K562 (cell line): ENCODE measurements at regions of chr3 and their contacts with region 1.

Region 1: GRCh38 chr3:129490242-129491045 is 38.0 kb upstream of the RHO start:
- DNase-seq: peak; percentile 72 to 84 (median 78)
- ATAC-seq: peak; percentile 100
- H3K4me3 ChIP-seq: no peak overlapping the region
- H3K27ac ChIP-seq: peak overlapping the region; percentile 40; the same call in 1 of the 3 replicates
- H3K4me1 ChIP-seq: peaks cover 2 to 6% of the 10 kb centered on the region in 2 experiments; a peak in 3 of 5 replicates
- H3K27me3 ChIP-seq: no peaks in the 10 kb centered on the region
- CTCF ChIP-seq: peak; percentile 75 to 86 (median 82)
- EP300 ChIP-seq: peak; percentile 56
- POLR2A ChIP-seq: no peak
- RAD21 ChIP-seq: peak; percentile 88 to 89

Region 2: DNA sequence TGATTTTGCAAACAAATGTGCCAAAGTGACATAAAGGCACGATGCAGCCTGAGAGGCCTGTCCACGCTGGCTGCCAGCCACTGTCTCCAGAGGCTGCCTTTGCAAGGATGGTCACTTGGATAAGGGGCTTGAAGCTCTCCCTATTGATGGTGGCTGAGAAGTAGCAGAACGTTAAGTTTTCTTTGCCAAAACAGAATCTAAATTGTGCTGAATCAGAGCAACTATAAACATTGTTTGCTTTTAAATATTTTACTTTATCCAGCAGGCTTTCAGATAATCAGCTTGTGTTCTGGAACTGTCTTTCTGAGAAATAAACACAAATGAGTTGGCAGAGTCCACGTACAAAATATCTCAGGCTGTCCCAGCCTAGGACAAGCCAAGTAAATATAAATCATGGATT is 283.0 kb before region 1 on chr3:
- CTCF ChIA-PET with region 1: no interaction called
- POLR2A ChIA-PET with region 1: no interaction called
- in situ Hi-C with region 1: no loop called
- intact Hi-C with region 1: no loop called
- DNase-seq: no peak
- ATAC-seq: peak; percentile 41; the same call in 1 of the 3 replicates
- H3K4me3 ChIP-seq: no peak overlapping the region
- H3K27ac ChIP-seq: peak overlapping the region; percentile 30; the same call in 1 of the 3 replicates
- H3K4me1 ChIP-seq: peaks cover 4 to 9% of the 10 kb centered on the region in 2 experiments; a peak in 4 of 5 replicates
- H3K27me3 ChIP-seq: no peaks in the 10 kb centered on the region
- CTCF ChIP-seq: no peak
- EP300 ChIP-seq: no peak
- POLR2A ChIP-seq: no peak
- RAD21 ChIP-seq: no peak

Region 3: DNA sequence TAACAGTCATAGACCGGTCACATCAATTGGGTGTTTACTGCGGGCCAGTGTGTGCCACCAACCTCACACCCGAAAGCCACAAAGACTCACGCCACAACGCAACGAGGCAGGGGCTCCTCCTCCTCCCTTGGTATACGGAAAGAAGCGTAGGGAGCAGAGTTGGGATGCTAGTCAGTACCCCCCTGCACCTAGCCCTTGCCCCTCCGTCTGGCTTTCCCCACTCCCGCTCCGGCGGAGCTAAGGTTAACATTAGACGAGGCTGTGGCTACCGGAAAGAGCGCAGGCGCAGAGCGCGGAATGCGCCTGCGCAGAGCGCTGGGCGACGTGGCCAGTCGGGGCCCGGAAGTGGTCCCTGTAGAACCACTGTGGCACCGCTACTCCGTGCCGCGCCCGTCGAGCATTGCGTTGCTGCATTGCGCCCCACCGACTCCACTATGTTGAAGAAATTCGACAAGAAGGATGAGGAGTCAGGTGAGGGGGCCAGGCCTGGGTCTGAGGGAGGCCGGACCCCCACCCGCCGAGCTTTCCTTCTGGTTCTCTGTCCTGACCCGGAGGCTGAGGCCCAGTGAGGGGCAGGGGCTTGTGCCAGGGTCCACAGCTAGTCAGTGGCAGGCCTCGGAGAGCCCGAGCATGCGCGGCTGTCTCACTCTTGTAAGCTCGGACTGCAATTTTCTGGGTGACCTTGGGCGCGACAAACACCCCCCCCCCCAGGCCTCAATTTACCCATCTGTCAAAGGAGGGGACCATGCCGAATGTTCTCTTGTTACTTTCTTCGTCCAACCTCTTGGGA is 241.0 kb before region 1 on chr3 and contains the start of gene COPG1:
- CTCF ChIA-PET with region 1: no interaction called
- POLR2A ChIA-PET with region 1: no interaction called
- in situ Hi-C with region 1: no loop called
- intact Hi-C with region 1: no loop called
- DNase-seq: peak; percentile 89 to 93 (median 92)
- ATAC-seq: peak; percentile 90
- H3K4me3 ChIP-seq: peak within 1 kb of the TSS; percentile 92
- H3K27ac ChIP-seq: peak within 1 kb of the TSS; percentile 96
- H3K4me1 ChIP-seq: peaks cover 10 to 17% of the 10 kb centered on the region in 2 experiments; a peak in 3 of 5 replicates
- H3K27me3 ChIP-seq: no peaks in the 10 kb centered on the region
- CTCF ChIP-seq: no peak
- EP300 ChIP-seq: peak; percentile 13; the same call in 1 of the 2 replicates
- POLR2A ChIP-seq: peak; percentile 92
- RAD21 ChIP-seq: no peak
- polyA plus RNA-seq, gene COPG1: 40.6 to 105 TPM

Region 4: DNA sequence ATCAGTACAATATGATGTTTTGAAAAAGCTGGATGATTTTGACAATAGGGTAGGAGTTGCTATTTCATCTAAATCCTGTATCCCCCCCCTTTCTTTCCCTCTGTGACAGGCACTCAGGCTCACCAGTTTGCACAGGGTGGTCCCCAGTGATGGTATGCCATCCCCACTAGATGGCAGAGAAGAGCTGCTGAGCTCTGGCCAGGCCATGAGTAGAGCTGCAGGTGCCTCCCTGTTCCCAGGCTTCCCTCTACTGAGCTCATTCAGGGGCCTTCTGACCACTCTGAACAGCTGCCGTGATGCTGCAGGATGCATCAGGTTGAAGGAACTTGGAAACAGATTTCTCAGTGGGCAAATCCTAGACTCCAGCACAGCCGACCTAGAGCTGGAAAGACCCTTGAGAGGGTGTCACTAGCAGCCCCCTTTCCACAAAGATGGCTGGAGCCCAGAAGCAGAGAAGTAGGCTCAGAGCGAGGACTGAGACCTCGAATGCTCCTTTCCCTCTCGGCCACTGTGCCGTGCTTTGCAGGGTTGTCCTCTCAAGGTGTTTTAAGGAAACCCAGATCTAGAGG is 107.1 kb before region 1 on chr3:
- CTCF ChIA-PET with region 1: interaction called, 3 read pairs
- POLR2A ChIA-PET with region 1: no interaction called
- in situ Hi-C with region 1: no loop called
- intact Hi-C with region 1: loop called (anchors 2 kb)
- DNase-seq: peak; percentile 66 to 76 (median 70)
- ATAC-seq: peak; percentile 96
- H3K4me3 ChIP-seq: no peak overlapping the region
- H3K27ac ChIP-seq: no peak overlapping the region
- H3K4me1 ChIP-seq: peaks cover 0 to 2% of the 10 kb centered on the region in 2 experiments; a peak in 3 of 5 replicates
- H3K27me3 ChIP-seq: no peaks in the 10 kb centered on the region
- CTCF ChIP-seq: peak; percentile 75 to 80 (median 79)
- EP300 ChIP-seq: no peak
- POLR2A ChIP-seq: no peak
- RAD21 ChIP-seq: peak; percentile 64 to 80; a peak in 3 of 4 replicates

Region 5: DNA sequence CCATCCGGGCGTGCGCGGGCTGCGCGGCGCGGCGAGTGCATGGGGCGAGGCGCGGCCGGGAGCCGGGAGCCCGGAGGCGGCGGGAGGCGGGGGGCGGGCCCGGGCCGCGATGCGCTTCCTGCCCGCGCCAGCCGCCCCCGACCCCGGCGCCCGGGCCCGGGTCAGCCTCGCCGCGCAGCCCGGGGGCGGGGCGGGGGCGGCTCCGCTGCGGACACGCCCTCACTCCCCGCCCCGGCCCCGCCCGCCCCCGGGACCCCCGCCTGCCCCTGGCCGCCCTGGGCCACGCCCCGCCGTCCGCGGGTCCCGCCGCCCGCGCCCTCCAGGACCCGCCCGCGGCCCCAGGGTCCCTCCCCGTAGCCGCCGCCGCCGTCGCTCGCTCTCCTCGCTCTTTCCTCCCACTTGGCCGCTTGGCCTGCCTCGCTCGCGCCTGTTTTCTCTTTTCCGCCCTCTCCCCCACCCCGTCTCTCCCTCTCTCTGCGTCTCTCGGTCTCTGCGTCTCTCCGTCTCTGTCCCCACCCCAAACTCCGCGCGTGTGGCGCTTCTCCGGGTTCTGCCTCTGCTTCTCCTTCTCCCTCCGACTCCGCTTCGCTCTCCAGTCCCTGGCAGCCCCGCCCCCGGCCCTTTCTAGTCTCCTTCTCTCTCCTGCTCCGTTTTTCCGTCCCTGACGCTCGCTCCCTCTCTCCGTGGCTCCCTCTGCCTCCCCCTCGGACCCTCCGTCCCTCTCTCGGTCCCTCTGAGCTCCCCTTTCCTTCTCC is 116.4 kb after region 1 on chr3 and contains the start of gene PLXND1:
- CTCF ChIA-PET with region 1: no interaction called
- POLR2A ChIA-PET with region 1: no interaction called
- in situ Hi-C with region 1: no loop called
- intact Hi-C with region 1: loop called (anchors 1 kb)
- DNase-seq: peak; percentile 73 to 96 (median 92)
- ATAC-seq: peak; percentile 73
- H3K4me3 ChIP-seq: peak within 1 kb of the TSS; percentile 48
- H3K27ac ChIP-seq: peak within 1 kb of the TSS; percentile 76
- H3K4me1 ChIP-seq: peaks cover 30 to 79% of the 10 kb centered on the region in 2 experiments; a peak in 4 of 5 replicates
- H3K27me3 ChIP-seq: no peaks in the 10 kb centered on the region
- CTCF ChIP-seq: no peak
- EP300 ChIP-seq: no peak
- POLR2A ChIP-seq: peak; percentile 71
- RAD21 ChIP-seq: no peak
- polyA plus RNA-seq, gene PLXND1: 0.34 to 0.70 TPM

Region 6: DNA sequence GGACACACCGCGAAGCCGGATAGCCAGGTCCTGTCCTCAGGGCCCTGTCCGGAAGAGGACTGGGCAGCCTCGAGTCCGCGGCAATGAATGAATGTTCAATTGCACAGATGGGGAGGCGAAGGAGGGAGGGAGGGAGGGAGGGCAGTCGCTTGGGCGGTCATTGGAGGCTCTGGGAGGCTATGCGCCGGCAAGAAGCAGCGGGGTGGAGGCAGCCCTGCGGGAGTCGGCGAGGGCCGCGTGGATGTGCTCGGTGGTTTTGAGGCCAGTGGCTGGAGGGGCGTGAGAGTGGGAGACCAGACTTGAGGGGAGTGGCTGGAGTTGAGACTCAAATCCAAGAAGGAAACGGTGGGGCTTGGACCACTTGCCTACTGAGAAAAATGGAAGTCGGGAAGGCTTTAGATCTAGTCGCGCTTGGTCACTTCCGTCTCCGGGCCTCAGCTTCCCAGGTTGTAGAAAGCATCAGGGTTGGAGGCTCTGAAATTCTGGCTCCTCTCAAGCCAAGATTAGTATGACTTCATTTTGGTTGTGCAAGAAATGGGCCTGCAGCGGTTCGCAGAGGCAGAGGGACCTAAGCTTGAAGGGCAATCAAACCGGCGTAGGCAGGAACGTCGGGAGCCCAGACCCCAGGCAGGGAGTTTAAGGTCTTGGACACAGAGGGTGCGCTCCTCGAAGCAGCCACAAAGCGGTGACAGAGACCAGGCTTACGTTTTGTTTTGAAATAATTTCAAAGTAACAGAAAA is 137.2 kb after region 1 on chr3:
- CTCF ChIA-PET with region 1: interaction called, 4 read pairs
- POLR2A ChIA-PET with region 1: no interaction called
- in situ Hi-C with region 1: no loop called
- intact Hi-C with region 1: loop called (anchors 5 kb)
- DNase-seq: no peak
- ATAC-seq: no peak
- H3K4me3 ChIP-seq: peak overlapping the region; percentile 45; the same call in 1 of the 2 replicates
- H3K27ac ChIP-seq: no peak overlapping the region; the same call in 2 of the 3 replicates
- H3K4me1 ChIP-seq: peaks cover 5 to 51% of the 10 kb centered on the region in 2 experiments
- H3K27me3 ChIP-seq: no peaks in the 10 kb centered on the region
- CTCF ChIP-seq: peak; percentile 50 to 57 (median 52); a peak in 5 of 6 replicates
- EP300 ChIP-seq: no peak
- POLR2A ChIP-seq: no peak
- RAD21 ChIP-seq: peak; percentile 15 to 57; a peak in 2 of 4 replicates